Transverse colon (tissue), 4 donors: ENCODE measurements at regions of chr6 and their contacts with region 1.

Region 1: DNA sequence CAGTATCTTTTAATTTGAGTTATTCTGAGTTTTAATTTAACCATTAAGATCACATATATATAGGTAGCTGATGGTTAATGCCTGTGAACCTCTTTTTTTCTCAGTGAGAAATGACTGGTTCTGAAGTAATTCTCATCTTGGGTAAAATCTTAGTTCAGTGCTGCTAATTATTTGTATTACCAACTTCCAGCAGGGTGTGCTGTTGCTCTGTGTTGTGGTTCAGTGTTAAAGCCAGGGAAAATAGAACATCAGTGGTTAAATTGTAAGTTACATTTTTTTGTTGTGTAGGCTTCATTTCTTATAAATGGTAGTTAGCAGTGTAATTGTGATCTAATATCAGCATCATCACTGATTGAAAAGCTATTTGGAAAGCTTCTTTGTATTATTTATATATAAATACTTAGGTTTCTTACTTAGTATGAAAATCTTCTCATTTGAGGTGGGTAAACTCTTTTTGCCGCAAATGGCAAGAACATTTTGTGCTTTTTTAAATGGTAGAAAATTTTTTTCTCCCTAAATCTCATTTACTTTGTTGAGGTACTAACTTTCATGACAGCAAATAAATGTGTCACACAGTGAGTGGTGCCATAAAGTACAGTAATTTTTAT is 43.7 kb downstream of the CDC5L start:
- DNase-seq: peak; percentile 41
- H3K4me3 ChIP-seq: no peak overlapping the region
- H3K27ac ChIP-seq: peak overlapping the region in 3 of 4 donors; percentile 5 to 59 (median 11)
- H3K4me1 ChIP-seq: peaks cover 6 to 49% (median 24%) of the 10 kb centered on the region in 4 donors
- H3K27me3 ChIP-seq: no peaks in the 10 kb centered on the region
- CTCF ChIP-seq: peak; percentile 69 to 80 (median 70)
- EP300 ChIP-seq: no peak
- POLR2A ChIP-seq: no peak

Region 2: DNA sequence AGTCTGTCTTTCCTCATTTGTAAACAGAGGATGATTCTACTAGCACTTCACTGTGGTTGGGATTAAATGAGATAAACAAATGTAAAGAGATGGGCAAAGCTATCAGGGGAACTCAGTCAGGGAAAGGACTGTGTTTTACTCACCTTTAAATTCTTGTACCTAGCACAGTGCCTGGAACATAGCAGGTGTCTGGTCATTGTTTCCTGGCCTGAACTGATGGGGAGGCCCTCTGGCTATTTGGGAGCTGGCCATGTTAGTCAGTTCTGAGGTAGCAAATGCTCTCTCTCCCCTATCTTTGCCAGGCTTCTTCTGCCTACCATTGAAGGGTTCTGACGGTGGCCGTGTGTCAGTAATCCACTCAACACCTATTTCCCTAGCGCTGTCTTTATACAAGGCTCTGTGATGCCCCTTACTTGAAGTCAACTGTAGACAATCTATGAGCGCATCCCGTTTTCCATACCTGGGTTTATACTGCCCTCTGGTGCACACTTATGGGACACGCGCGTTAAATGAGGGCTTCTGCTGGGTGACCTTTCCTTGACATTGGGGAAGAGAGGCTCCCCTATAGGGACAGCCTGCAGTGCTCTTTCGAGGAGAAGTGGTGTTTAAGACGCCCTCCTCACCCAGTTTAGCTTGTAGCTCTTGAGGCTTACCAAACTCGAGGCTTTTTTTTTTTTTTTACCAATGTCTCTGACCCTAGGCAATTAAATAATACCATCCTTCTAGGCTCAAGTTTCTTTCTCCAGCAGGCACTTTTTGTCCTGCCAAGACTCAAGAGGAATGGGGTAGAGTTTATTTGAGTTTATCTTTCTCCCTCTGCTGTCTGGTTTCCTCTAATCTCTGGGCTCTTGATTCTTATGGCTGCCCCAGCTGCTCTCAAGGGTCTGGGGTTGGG is 92.7 kb before region 1 on chr6:
- in situ Hi-C with region 1: no loop called
- intact Hi-C with region 1: no loop called
- DNase-seq: peak; percentile 70
- H3K4me3 ChIP-seq: no peak overlapping the region
- H3K27ac ChIP-seq: no peak overlapping the region
- H3K4me1 ChIP-seq: peaks cover 0 to 6% (median 0%) of the 10 kb centered on the region in 4 donors
- H3K27me3 ChIP-seq: peaks cover 30% of the 10 kb centered on the region
- CTCF ChIP-seq: peak; percentile 66 to 85 (median 75)
- EP300 ChIP-seq: no peak
- POLR2A ChIP-seq: no peak

Region 3: DNA sequence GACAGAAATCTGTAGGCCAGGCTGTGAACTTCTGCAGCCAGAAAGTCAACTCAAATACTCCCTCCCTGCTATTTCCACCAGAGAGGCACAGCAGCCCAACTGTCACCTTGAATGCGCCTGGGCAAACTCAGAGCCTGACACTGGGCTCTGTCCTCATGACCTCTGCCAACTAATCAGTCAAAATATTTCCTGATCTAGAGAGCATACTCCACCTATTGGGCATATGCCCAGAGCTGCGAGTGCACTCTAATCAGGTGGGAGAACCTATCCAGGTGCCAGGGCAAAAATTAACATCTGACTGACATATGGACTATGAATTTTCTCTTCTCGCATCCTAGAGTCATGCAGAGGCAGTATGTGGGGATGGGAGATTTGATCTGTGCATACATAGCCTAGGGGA is 490.6 kb after region 1 on chr6:
- in situ Hi-C with region 1: no loop called
- intact Hi-C with region 1: loop called (anchors 5 kb)
- DNase-seq: no peak
- H3K4me3 ChIP-seq: no peak overlapping the region
- H3K27ac ChIP-seq: no peak overlapping the region
- H3K4me1 ChIP-seq: peaks cover 0 to 7% (median 0%) of the 10 kb centered on the region in 4 donors
- H3K27me3 ChIP-seq: no peaks in the 10 kb centered on the region
- CTCF ChIP-seq: no peak
- EP300 ChIP-seq: no peak
- POLR2A ChIP-seq: no peak